Activated B cell treated with CpG ODN at 0.5 μM for 24 hours (primary cell): ENCODE measurements at regions of chr10 and their contacts with region 1.

Region 1: GRCh38 chr10:22606164-22606614 is 108.2 kb downstream of the PIP4K2A start:
- DNase-seq: no peak
- ATAC-seq: peak; percentile 75
- H3K4me3 Mint-ChIP-seq: peak overlapping the region; percentile 68
- H3K27ac Mint-ChIP-seq: peak overlapping the region; percentile 94
- H3K4me1 Mint-ChIP-seq: peaks cover 93% of the 10 kb centered on the region
- H3K27me3 Mint-ChIP-seq: no peaks in the 10 kb centered on the region
- CTCF ChIP-seq: no peak

Region 2: GRCh38 chr10:22589851-22590514 is 16.2 kb before region 1 on chr10:
- CTCF ChIA-PET with region 1: no interaction called
- POLR2A ChIA-PET with region 1: interaction called, 4 read pairs
- intact Hi-C with region 1: loop called (anchors 2 kb)
- DNase-seq: no peak
- ATAC-seq: no peak
- H3K4me3 Mint-ChIP-seq: no peak overlapping the region
- H3K27ac Mint-ChIP-seq: no peak overlapping the region
- H3K4me1 Mint-ChIP-seq: peaks cover 37% of the 10 kb centered on the region
- H3K27me3 Mint-ChIP-seq: no peaks in the 10 kb centered on the region
- CTCF ChIP-seq: no peak

Region 3: GRCh38 chr10:22635650-22636049 is 29.5 kb after region 1 on chr10:
- CTCF ChIA-PET with region 1: interaction called, 4 read pairs
- POLR2A ChIA-PET with region 1: interaction called, 25 read pairs
- intact Hi-C with region 1: loop called (anchors 1 kb)
- DNase-seq: no peak
- ATAC-seq: peak; percentile 63
- H3K4me3 Mint-ChIP-seq: peak overlapping the region; percentile 56
- H3K27ac Mint-ChIP-seq: peak overlapping the region; percentile 86
- H3K4me1 Mint-ChIP-seq: peaks cover 93% of the 10 kb centered on the region
- H3K27me3 Mint-ChIP-seq: no peaks in the 10 kb centered on the region
- CTCF ChIP-seq: no peak